Posterior cingulate gyrus (tissue), 11 donors: ENCODE measurements at regions of chr1 and their contacts with region 1.

Region 1: DNA sequence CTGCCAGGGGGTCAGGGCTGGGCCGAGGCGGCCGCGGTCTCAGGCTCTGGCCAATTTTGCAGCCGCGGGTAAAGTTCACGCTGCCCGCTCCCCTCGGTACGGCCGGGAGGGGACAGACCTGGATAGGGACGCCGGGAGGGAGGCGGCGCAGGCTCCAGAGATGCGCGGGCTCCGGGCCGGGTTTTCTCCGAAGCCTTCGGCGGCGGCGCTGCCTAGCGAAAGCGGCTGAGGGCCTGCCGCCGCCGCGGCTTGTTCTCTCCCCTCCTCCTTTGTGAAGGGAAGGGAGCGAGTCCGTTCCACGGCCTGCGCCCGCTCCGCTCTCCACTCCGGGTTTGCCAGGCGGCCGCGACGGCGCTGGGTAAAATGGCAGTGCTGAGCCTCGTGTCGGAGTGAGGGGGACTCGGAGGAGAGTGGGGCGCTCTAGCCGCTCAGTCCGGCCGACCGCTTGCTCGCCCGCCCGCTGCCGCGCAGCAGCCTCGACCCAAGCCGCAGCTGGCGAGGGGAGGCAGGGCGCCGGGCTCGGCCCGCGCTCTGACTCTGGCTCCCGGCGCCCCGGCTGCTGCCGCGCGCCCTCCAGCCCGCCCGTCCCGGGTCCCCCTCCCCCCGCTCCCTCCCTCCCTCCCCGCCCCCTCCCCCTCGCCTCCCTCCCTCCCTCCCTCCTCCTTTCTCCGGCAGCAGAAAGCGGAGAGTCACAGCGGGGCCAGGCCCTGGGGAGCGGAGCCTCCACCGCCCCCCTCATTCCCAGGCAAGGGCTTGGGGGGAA is at the start of gene ARID1A:
- DNase-seq: peak; percentile 90 to 98 (median 92)

Region 2: GRCh38 chr1:26190373-26190987 is 505.1 kb before region 1 on chr1 and contains the start of gene CATSPER4:
- intact Hi-C with region 1: no loop called
- DNase-seq: peak in 2 of 10 donors; percentile 20 to 29

Region 3: DNA sequence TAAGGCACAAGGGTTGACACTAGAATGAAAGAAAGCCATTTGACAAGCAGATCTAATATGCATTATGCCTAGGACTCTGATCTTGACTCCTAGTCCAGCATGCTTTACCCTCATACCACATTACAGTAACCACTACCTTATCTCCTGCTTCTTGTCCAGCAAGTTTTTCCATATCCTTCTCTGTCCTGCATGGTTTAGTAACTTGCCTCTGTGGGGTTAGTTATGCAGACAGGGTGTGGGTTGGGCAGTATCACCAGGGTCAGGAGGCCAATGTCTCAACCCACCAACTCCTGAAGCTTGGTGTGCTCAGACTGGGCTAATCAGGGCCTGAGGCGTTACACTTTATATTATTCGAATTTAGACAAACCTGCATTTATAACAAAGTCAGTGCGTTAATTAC is 244.6 kb before region 1 on chr1:
- intact Hi-C with region 1: no loop called
- DNase-seq: no peak

Region 4: GRCh38 chr1:26496861-26497260 is 198.7 kb before region 1 on chr1:
- intact Hi-C with region 1: no loop called
- DNase-seq: peak in 1 of 10 donors; percentile 72

Region 5: GRCh38 chr1:26744075-26744959 is 48.8 kb after region 1 on chr1:
- intact Hi-C with region 1: loop called (anchors 10 kb)
- DNase-seq: peak; percentile 38 to 94 (median 59)

Region 6: DNA sequence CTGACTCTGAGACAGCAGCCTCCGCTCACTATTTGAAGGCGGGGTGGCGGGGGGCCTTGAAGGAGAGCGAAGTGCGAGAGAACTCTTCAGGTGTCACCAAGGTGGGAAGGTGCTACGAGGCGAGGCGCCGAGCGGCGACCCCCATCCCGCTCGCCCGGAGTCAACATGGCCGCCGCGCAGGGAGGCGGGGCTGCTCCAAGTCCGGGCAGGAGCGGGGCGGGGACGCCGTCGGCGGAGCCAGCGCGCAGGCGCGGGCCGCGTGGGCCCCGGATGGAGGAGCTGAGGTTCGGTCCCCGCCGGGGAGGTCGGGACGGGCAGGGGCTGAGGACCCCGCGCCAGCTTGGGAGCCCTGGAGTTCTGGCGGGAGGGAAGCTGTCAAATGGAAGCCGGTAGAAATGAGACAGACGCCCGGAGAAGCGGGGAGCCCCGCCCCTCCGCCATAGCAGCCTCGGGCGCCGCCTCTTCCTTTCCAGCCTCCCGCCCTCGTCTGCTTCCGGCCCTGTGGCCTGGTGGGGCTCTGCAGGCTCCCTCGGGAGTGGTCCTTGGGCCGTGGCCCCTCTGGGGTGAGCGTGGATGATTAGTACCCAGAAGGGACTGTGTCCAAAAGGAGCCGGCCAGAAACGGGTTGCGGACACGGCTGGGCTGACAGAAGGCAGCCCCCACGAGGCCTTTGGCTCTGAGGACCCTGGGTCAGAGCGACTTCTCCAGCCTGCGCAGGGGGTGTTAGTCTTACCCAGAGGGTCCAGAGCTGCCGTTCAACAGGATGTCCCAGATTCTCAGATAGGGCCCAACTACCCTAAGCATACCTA is 92.4 kb after region 1 on chr1 and contains the start of gene PIGV:
- intact Hi-C with region 1: loop called (anchors 2 kb)
- DNase-seq: peak; percentile 81 to 98 (median 86)

Region 7: DNA sequence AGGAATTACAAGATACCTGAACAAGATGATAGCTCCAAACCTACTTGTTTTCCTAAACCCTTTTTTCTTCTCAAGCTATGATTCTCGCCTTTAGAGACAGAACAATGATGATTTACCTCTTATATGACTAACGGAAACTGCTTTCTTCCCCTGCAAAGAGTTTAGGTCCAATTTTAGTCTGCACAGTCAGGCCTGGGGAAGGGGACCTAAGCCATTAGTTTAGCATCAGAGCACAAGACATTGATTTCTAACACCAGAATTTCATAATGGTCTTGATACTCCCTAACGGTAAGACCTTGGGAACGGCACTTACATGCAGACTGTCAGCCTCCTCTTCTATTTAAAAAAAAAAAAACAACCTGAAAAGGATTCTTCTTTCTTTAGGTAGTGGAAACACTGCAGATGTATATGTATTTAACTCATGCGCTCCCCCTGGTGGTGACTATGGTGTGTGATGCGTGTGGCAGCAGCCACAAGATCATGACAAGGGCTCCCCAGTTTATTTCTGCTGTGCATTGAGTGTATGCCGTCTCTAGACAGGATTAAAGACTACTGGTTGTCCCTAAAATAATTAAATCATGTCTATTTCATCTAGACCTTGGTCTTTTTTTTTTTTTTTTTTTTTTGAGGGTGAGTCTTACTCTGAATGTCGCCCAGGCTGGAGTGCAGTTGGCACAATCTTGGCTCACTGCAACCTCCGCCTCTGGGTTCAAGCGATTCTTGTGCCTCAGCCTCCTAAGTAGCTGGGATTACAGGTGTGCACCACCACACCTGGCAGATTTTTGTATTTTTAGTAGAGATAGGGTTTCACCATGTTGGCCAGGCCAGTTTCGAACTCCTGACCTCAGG is 589.1 kb after region 1 on chr1:
- intact Hi-C with region 1: no loop called
- DNase-seq: peak; percentile 53 to 95 (median 86)